Sigmoid colon (tissue), 7 donors: ENCODE measurements at regions of chr12 and their contacts with region 1.

Region 1: DNA sequence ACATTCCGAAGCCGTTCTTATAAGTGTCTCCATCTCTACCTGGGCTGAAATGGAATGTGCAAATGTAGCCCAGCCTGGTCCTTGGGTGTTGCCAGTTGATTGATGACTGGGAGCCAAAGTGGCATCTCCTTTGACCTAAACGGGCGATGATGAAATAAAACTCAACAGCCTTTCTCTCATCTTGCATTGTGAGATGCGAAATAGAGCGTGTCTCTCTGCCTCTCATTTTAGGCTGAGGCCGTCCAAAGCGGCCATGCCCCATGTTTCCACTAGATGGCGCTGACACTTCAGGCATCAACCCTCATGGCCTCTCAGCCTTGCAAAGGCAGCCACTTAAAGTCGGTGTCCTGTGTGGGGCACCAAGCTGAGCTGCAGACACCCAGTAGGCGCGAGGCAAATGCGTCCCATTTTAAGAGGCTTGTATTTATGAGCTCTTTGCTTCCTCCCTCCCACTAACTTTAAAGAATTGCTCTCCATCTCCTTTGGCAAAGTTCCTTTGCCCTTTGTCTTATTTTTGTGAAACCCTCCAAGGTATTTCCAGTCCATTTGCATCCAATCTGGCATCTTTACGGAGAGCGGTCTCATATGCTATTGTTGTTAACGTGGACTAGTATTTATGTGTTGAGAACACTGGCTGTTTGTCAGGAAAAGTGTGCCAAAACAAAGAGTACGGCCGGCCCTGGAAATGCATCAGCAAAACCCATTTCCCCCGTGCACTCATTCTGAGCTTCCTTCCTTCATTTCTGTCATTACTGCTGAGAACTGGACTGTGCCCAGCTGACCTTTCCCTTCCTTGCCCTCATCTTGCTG is 25.0 kb downstream of the GPRC5A start:
- DNase-seq: peak; percentile 91
- H3K4me3 ChIP-seq: no peak overlapping the region
- H3K27ac ChIP-seq: peak overlapping the region in 3 of 4 donors; percentile 31 to 50 (median 37)
- H3K4me1 ChIP-seq: peaks cover 0 to 3% (median 0%) of the 10 kb centered on the region in 4 donors
- H3K27me3 ChIP-seq: no peaks in the 10 kb centered on the region
- CTCF ChIP-seq: peak; percentile 90 to 96 (median 93)
- EP300 ChIP-seq: no peak
- POLR2A ChIP-seq: no peak

Region 2: DNA sequence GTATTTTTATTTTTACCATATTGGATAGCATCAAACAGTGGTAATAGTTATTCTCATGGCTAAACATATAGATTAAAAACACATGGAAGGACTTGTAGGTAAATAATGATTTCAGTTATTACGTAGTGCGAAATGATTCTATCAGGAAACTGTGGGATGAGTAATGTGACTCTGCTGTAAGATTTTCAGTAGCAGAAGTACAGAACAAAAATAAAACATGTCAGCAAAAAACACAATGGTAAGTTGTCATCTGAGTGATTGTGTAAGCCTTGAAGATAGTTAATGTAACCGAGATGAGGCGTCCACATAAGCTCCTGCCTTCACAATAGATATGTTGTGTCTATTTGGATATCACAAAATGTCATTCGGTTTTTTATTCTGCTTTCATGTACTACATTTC is 459.7 kb before region 1 on chr12:
- intact Hi-C with region 1: no loop called
- DNase-seq: no peak
- H3K4me3 ChIP-seq: no peak overlapping the region
- H3K27ac ChIP-seq: no peak overlapping the region
- H3K4me1 ChIP-seq: peaks cover 0 to 13% (median 4%) of the 10 kb centered on the region in 4 donors
- H3K27me3 ChIP-seq: no peaks in the 10 kb centered on the region
- CTCF ChIP-seq: no peak
- EP300 ChIP-seq: no peak
- POLR2A ChIP-seq: no peak

Region 3: GRCh38 chr12:12983420-12984035 is 67.2 kb after region 1 on chr12:
- intact Hi-C with region 1: loop called (anchors 2 kb)
- DNase-seq: no peak
- H3K4me3 ChIP-seq: no peak overlapping the region
- H3K27ac ChIP-seq: no peak overlapping the region
- H3K4me1 ChIP-seq: peaks cover 0 to 24% (median 17%) of the 10 kb centered on the region in 4 donors
- H3K27me3 ChIP-seq: no peaks in the 10 kb centered on the region
- CTCF ChIP-seq: peak in 3 of 4 experiments; percentile 30 to 53 (median 43)
- EP300 ChIP-seq: no peak
- POLR2A ChIP-seq: no peak